Tibial artery (tissue), 4 donors: ENCODE measurements at regions of chr14 and their contacts with region 1.

Region 1: GRCh38 chr14:92644171-92644969 is 104.1 kb downstream of the LGMN start:
- DNase-seq: no peak
- H3K4me3 ChIP-seq: no peak overlapping the region
- H3K27ac ChIP-seq: peak overlapping the region; percentile 15 to 97
- H3K4me1 ChIP-seq: peaks cover 3 to 41% (median 21%) of the 10 kb centered on the region in 4 donors
- H3K27me3 ChIP-seq: no peaks in the 10 kb centered on the region
- CTCF ChIP-seq: no peak

Region 2: DNA sequence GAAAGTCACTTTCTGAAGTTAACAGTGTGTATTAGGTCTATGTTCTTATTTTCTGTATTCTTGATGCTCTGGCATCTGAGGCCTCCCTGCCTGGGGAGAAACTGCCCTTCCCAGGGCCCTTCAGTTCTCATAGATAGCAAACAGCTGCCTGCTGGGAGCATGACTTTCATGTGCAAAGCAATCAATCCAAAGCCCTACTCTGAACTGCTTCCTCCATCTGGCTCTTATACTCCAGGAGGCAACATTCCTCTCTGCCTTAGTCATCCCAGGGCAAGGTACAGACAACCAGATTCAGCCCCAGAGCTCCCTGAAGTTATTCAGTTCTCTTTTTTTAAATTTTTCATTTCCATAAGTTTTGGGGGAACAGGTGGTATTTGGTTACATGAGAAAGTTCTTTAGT is 172.5 kb before region 1 on chr14:
- intact Hi-C with region 1: no loop called
- DNase-seq: no peak
- H3K4me3 ChIP-seq: no peak overlapping the region
- H3K27ac ChIP-seq: no peak overlapping the region
- H3K4me1 ChIP-seq: no peaks in the 10 kb centered on the region
- H3K27me3 ChIP-seq: no peaks in the 10 kb centered on the region
- CTCF ChIP-seq: no peak

Region 3: DNA sequence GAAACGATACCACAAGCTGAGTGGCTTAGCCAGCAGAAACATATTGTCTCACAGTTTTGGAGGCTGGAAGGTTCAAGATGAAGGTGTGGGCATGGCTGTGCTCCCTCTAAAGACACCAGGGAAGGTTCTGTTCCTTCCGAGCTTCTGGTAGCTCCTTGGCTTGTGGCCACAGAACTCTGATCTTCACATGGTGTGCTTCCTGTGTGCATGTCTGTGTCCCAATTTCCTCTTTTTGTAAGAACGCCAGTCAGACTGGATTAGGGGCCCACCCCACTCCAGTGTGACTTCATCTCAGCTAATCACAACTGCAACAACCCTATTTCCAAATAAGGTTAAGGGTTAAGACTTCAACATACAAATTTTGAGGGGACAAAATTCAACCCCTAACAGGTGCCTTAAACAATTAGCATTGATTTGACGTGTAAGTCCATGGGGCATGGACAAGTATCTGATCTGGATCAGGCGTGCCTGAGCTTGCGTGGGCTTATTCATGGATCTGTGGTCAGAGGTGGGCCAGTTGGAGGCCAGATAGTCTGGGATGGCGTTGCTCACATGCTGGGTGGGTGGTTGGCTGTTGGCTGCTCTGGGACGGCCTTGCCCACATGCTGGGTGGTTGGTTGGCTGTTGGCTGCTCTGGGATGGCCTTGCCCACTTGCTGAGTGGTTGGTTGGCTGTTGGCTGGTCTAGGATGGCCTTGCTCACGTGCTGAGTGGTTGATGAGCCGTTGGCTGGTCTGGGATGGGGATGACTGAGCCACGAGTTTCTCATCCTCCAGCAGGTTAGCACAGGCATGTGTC is 15.6 kb after region 1 on chr14:
- intact Hi-C with region 1: no loop called
- DNase-seq: peak in 1 of 2 donors; percentile 79
- H3K4me3 ChIP-seq: no peak overlapping the region
- H3K27ac ChIP-seq: no peak overlapping the region
- H3K4me1 ChIP-seq: peaks cover 0 to 3% (median 0%) of the 10 kb centered on the region in 4 donors
- H3K27me3 ChIP-seq: no peaks in the 10 kb centered on the region
- CTCF ChIP-seq: no peak

Region 4: GRCh38 chr14:93200553-93200952 is 556.2 kb after region 1 on chr14:
- intact Hi-C with region 1: loop called (anchors 5 kb)
- DNase-seq: no peak
- H3K4me3 ChIP-seq: no peak overlapping the region
- H3K27ac ChIP-seq: no peak overlapping the region
- H3K4me1 ChIP-seq: peaks cover 0 to 4% (median under 1%) of the 10 kb centered on the region in 4 donors
- H3K27me3 ChIP-seq: no peaks in the 10 kb centered on the region
- CTCF ChIP-seq: no peak